ENCODE measurements at regions of chr1 and their contacts with region 1.

Region 1: DNA sequence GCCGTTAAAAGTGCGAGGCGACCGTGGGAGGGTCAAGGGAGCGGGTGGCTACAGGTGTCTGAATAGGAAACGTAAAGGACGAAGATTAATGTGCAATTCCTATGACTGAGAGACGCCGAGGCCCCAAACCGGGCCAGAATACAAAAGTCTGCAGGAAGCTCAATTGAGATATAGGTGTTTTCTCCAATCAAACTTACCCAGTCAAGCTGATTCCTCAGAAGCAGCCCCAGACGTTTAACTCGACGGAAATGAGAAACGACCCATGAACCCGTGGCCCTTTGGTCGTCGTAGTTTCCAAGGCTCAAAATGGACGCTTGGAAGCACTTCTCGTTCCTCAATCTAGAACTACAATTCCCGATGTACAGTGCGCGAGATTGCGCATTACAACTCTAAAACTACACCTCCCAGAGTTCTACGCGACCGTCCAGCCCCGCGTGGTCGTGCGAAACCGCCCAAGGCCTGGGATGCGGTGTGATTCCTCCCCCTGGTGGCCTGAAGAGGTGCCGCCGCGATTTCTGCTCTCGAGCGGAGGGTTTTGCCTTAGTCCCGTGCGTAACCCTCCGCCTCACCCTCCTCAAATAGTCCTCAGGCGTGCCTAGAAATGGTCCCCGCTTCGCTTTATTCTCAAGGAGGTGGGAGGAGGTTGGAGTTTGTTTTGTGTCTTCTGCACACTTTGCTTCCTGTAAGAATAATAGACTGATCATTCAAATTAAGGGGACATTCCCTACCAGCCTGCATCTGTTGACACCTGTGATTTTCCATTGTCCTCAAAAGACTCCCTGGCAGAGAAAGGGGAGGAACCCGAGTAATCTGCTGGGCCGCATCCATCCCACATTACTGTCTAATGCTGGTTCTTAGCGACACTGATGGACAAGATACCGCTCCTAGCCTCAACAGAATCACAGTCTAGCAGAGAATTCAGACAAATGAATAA is at the start of gene PAFAH2:
- DNase-seq: peak; percentile 99
- total RNA-seq, gene PAFAH2: 18.5 TPM

Region 2: DNA sequence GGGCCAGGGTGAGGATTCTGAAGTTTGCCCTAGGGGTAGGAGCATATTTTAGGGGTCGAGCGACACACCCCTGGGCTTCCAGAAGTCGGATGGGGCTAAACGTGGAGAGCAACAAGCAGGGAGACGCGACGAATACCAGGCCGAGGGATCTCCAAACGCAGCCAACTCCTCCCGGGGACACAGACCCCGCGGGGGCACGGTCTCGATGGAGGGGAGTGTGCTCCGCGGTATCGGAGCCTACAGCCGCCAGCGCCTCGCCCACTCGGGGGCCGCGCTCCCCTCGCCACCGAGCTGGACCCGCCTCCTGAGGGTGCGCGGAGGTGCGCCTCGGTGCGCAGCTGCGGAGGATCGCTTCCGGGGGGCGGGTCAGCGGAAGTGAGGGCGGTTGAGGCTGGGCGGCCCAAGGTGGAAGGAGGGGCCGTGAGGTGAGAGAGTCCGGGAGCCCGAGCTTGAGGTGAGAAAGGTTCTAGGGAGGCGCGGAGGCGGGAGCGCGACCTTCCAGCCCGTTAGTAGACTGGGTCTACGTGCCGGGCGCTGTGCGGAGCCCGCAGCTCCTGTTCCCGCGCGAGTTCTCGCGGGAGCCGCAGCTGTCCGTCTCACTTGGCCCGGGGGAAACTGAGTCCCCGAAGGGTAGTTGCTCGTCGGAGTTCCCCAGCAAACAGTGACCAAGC is 178.4 kb before region 1 on chr1 and contains the start of gene MTFR1L:
- intact Hi-C with region 1: loop called (anchors 5 kb)
- DNase-seq: peak; percentile 96
- total RNA-seq, gene MTFR1L: 187 TPM

Region 3: DNA sequence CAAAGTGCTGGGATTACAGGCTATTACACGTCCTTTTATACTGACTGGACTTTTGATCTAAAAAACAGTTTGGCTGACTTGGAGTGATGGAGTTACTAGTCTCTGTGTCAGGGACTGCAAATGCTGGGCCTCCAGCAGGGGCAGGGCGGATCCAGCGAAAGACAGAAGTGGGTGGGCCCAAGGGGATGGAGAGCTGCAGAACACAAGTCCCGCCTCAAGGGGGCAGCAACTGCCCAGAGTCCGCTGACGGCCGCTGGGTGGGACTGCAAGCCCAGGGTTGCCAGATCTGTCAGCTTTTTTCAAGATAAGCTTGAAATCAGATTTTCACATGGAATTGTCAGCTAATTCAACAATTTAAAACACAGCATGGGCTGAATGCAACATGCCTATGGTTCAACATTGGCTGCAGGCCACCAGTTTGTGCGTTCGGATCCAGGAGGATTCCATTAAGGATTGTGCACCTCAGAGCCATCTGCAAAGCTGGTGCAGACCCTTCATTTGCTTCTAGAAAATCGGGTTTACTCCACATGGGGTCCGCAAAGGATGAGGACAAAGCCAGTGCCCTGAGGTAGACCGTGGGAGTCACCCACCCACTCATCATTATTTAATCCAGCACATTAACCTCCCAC is 102.6 kb before region 1 on chr1:
- intact Hi-C with region 1: loop called (anchors 1 kb)
- DNase-seq: peak; percentile 91

Region 4: GRCh38 chr1:25904943-25905679 is 93.0 kb before region 1 on chr1:
- intact Hi-C with region 1: loop called (anchors 2 kb)
- DNase-seq: peak; percentile 97

Region 5: DNA sequence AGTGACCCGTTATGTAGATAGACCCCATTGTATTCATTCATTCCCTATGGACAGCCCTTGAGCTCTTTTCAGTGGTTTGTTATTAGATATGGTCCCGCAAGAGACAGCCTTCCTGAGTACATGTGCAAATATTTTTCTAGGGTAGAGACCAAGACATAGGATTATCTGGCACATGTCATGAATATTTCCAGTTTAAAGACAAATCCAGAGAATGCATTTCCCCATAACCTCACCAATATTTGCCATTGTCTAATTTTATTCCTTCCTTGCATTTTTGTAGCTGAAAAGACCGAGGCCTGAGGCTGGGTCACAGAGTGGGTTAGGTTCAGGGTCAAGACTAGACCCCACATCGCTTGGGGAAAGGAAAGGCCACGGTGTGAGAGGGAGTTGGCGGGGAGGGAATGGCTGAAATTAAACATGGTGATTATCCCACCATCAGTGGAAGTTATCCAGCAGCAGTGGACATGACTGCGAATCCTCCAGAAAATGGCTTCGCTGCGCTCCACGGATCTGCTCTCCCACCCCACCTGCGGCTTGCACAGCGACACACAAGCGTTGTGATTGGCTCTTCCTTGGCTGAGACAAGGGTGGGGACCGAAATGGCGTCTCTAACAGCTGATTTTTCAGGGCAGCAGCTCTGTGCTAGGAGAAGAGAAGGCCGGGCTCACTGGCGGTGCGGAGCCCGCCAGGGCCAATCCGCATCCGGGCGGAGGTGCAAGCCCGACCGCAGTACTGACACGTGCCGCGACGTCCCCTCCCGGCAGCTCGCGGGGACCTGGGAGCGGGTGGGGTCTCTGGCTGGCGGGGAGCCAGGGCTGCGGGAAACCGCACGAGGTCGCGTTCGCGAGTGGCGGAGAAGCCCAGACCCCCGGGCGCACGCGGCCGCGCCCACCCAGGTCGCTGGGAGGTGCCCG is 75.8 kb before region 1 on chr1:
- intact Hi-C with region 1: loop called (anchors 5 kb)
- DNase-seq: peak; percentile 76